ENCODE measurements at regions of chr15 and their contacts with region 1.

Region 1: GRCh38 chr15:45587095-45587860 is at the start of gene BLOC1S6:
- DNase-seq: peak; percentile 93
- H3K4me3 ChIP-seq: peak within 1 kb of the TSS; percentile 96
- H3K27ac ChIP-seq: peak within 1 kb of the TSS; percentile 78
- H3K4me1 ChIP-seq: peaks cover 44% of the 10 kb centered on the region
- CTCF ChIP-seq: no peak
- total RNA-seq, gene BLOC1S6: 50.2 and 74.7 TPM in 2 replicates

Region 2: DNA sequence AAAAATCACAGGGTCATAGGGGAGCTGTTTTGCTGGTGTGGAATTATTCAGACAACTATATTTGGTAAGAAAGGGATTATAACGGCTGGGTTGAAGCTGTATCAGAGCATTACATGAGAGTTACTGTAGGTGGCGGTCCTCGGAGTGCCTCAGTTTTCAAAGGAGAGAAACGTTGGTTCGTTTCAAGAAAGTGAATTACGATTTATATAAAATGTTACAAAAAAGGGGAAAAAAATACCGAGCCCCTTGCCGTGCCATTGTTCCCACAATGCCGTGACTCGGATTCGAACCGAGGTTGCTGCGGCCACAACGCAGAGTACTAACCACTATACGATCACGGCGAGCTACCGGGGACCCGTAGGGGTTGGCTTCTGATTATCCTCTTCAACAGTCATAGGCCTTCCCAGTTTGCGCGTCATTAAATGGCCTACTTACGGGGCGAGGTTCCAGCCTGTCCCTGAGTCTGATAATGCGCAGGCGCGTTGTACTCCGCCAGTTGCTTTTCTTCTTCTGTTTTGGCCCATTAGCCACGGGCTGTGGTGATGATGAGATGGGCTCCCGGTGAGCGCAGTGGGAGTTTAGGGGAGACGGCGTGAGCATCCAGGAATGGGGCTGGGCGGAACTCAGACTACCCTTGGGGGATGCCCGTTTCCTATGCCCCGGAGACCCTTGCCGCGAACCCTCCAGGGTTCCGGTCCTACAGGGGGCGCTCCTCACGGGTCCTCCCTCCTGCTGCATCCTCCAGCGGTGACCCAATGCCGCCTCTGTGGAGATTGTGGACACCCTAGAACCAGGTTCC is 388.7 kb before region 1 on chr15:
- CTCF ChIA-PET with region 1: no interaction called
- POLR2A ChIA-PET with region 1: interaction called, 4 read pairs
- intact Hi-C with region 1: loop called (anchors 5 kb)
- DNase-seq: peak; percentile 95
- H3K4me3 ChIP-seq: peak overlapping the region; percentile 85
- H3K27ac ChIP-seq: peak overlapping the region; percentile 76
- H3K4me1 ChIP-seq: peaks cover 31% of the 10 kb centered on the region
- CTCF ChIP-seq: peak; percentile 85

Region 3: DNA sequence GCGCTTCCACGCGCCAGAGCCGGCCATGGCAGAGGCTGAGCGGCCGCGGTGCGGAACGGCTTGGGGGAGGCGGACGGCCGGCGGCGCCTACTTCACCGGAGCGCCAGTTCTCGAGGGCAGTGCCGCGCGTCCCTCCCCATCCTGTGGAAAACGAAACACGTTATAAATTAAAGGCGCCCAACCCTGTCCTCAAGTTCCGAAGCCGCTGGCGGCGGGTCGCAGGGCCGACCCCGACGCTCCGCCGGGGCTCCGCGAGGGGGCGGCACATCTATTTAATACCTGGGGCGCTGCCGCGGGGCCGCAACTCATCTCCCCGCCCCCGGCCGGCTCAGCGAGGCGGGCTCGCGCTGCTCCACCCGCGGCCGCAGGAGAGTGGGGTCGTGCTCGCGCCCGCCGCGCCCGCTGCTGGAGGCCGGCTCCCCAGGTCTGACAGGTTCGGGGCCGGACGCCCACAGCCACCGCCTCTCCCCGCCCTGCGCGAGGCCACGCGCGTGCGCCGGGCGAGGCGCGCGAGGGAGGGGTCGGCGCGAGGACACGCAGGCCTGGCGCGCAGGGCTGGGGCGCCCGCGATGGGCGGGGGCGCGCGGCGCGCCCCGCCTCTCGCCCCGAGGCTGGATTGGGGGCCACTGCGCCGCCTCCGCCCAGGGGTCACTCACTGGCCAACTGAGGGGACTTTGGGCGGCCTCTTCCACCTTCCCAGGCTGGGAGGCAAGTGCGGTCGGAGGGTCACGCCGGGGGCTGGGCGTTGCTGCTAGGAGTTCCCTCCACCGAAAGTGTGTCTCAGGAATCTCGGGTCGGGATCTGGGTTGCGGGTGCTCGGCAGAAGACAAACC is 64.7 kb before region 1 on chr15 and contains the start of gene SLC30A4:
- CTCF ChIA-PET with region 1: no interaction called
- POLR2A ChIA-PET with region 1: no interaction called
- intact Hi-C with region 1: loop called (anchors 2 kb)
- DNase-seq: peak; percentile 57
- H3K4me3 ChIP-seq: peak within 1 kb of the TSS; percentile 67
- H3K27ac ChIP-seq: no peak within 1 kb of the TSS
- H3K4me1 ChIP-seq: peaks cover 15% of the 10 kb centered on the region
- CTCF ChIP-seq: peak; percentile 63
- total RNA-seq, gene SLC30A4: 0.13 TPM in 2 replicates

Region 4: DNA sequence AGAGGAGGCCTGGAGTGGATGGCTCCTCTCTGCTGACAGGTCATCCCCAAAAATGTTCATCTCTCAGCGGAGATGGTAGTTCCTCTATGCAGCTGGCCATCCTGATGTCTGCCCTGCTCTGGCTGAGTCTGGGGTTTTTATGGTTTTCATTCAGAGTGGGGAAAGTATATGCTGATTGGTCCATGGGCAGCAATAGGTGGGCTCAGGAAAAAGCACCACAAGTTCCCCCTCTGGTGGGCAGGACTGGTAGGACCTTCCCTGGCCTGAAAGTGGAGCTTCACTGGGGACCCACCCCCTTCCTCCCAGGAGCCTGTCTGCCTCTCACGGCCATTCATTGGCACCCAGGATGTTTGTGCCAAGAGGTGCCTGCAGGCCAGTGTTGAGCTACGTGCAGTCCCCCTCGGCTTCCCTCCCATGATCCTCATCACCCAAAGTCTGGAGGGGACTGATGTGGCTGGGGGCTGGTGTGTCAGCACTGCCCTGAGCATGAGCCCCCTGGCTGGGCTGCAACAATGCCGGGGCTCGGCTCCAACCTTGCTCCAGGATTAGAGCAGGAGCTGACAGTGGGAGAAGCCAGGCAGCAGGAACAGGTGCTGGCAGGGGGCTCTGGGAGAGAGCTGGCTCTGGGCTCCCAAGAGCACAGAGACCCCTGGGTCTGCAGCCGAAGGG is 13.2 kb before region 1 on chr15:
- CTCF ChIA-PET with region 1: interaction called, 3 read pairs
- POLR2A ChIA-PET with region 1: interaction called, 13 read pairs
- intact Hi-C with region 1: no loop called
- DNase-seq: peak; percentile 55
- H3K4me3 ChIP-seq: no peak overlapping the region
- H3K27ac ChIP-seq: no peak overlapping the region
- H3K4me1 ChIP-seq: peaks cover 10% of the 10 kb centered on the region
- CTCF ChIP-seq: peak; percentile 38

Region 5: DNA sequence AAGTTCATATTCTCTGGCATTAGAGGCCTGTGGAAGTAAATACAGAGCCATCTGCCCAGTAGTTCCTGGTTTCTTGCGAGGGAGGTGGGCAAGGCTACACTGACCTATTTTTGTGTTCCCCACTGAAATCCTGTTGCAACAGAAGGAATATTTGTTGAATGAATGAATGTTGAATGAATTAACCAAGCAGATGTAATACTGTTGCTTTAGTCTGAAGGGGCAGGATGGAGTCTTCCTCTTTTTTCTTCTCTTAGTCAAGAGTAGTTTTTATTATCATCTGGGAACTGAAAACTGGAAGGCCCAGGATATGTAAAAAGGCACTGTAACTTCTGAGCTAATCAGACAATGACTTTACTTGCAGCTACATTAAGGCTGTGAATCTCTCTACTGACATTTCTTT is 17.0 kb after region 1 on chr15:
- CTCF ChIA-PET with region 1: interaction called, 3 read pairs
- POLR2A ChIA-PET with region 1: interaction called, 25 read pairs
- intact Hi-C with region 1: loop called (anchors 2 kb)
- DNase-seq: peak; percentile 35
- H3K4me3 ChIP-seq: peak overlapping the region; percentile 29
- H3K27ac ChIP-seq: peak overlapping the region; percentile 70
- H3K4me1 ChIP-seq: peaks cover 44% of the 10 kb centered on the region
- CTCF ChIP-seq: no peak

Region 6: GRCh38 chr15:45611305-45611704 is 24.0 kb after region 1 on chr15:
- CTCF ChIA-PET with region 1: no interaction called
- POLR2A ChIA-PET with region 1: interaction called, 11 read pairs
- intact Hi-C with region 1: loop called (anchors 2 kb)
- DNase-seq: peak; percentile 59
- H3K4me3 ChIP-seq: no peak overlapping the region
- H3K27ac ChIP-seq: no peak overlapping the region
- H3K4me1 ChIP-seq: peaks cover 17% of the 10 kb centered on the region
- CTCF ChIP-seq: peak; percentile 86